Activated naive CD8-positive, alpha-beta T cell treated with anti-CD3 and anti-CD28 coated beads, Interleukin-2, amount 10 ng/mL, durations not matched to agents 7 days and 5 days (primary cell): ENCODE measurements at regions of chr3 and their contacts with region 1.

Region 1: GRCh38 chr3:129316131-129317013 is 37.7 kb downstream of the HMCES start:
- DNase-seq: peak; percentile 93
- ATAC-seq: peak; percentile 41
- H3K4me3 Mint-ChIP-seq: peak overlapping the region; percentile 81
- H3K27ac Mint-ChIP-seq: peak overlapping the region; percentile 65
- H3K4me1 Mint-ChIP-seq: peaks cover 29% of the 10 kb centered on the region
- H3K27me3 Mint-ChIP-seq: no peaks in the 10 kb centered on the region

Region 2: GRCh38 chr3:128650096-128651050 is 666.0 kb before region 1 on chr3 and contains the start of gene RPN1:
- POLR2A ChIA-PET with region 1: interaction called, 11 read pairs
- DNase-seq: peak; percentile 93
- ATAC-seq: peak; percentile 97
- H3K4me3 Mint-ChIP-seq: peak within 1 kb of the TSS; percentile 86
- H3K27ac Mint-ChIP-seq: peak within 1 kb of the TSS; percentile 88
- H3K4me1 Mint-ChIP-seq: peaks cover 27% of the 10 kb centered on the region
- H3K27me3 Mint-ChIP-seq: peaks cover 3% of the 10 kb centered on the region
- total RNA-seq, gene RPN1: 117 to 118 TPM

Region 3: GRCh38 chr3:129016356-129016719 is 300.0 kb before region 1 on chr3:
- POLR2A ChIA-PET with region 1: interaction called, 28 read pairs
- DNase-seq: peak; percentile 68
- ATAC-seq: peak; percentile 91
- H3K4me3 Mint-ChIP-seq: peak overlapping the region; percentile 61
- H3K27ac Mint-ChIP-seq: peak overlapping the region; percentile 90
- H3K4me1 Mint-ChIP-seq: peaks cover 29% of the 10 kb centered on the region
- H3K27me3 Mint-ChIP-seq: no peaks in the 10 kb centered on the region

Region 4: DNA sequence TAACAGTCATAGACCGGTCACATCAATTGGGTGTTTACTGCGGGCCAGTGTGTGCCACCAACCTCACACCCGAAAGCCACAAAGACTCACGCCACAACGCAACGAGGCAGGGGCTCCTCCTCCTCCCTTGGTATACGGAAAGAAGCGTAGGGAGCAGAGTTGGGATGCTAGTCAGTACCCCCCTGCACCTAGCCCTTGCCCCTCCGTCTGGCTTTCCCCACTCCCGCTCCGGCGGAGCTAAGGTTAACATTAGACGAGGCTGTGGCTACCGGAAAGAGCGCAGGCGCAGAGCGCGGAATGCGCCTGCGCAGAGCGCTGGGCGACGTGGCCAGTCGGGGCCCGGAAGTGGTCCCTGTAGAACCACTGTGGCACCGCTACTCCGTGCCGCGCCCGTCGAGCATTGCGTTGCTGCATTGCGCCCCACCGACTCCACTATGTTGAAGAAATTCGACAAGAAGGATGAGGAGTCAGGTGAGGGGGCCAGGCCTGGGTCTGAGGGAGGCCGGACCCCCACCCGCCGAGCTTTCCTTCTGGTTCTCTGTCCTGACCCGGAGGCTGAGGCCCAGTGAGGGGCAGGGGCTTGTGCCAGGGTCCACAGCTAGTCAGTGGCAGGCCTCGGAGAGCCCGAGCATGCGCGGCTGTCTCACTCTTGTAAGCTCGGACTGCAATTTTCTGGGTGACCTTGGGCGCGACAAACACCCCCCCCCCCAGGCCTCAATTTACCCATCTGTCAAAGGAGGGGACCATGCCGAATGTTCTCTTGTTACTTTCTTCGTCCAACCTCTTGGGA is 66.9 kb before region 1 on chr3 and contains the start of gene COPG1:
- POLR2A ChIA-PET with region 1: interaction called, 22 read pairs
- DNase-seq: peak; percentile 94
- ATAC-seq: peak; percentile 92
- H3K4me3 Mint-ChIP-seq: peak within 1 kb of the TSS; percentile 99
- H3K27ac Mint-ChIP-seq: peak within 1 kb of the TSS; percentile 98
- H3K4me1 Mint-ChIP-seq: peaks cover 42% of the 10 kb centered on the region
- H3K27me3 Mint-ChIP-seq: no peaks in the 10 kb centered on the region
- total RNA-seq, gene COPG1: 131 to 138 TPM

Region 5: GRCh38 chr3:129305592-129306091 is 10.7 kb before region 1 on chr3:
- POLR2A ChIA-PET with region 1: interaction called, 91 read pairs
- DNase-seq: no peak
- ATAC-seq: no peak
- H3K4me3 Mint-ChIP-seq: no peak overlapping the region
- H3K27ac Mint-ChIP-seq: no peak overlapping the region
- H3K4me1 Mint-ChIP-seq: peaks cover 21% of the 10 kb centered on the region
- H3K27me3 Mint-ChIP-seq: no peaks in the 10 kb centered on the region

Region 6: GRCh38 chr3:129352650-129353588 is 36.5 kb after region 1 on chr3:
- POLR2A ChIA-PET with region 1: no interaction called
- DNase-seq: no peak
- ATAC-seq: no peak
- H3K4me3 Mint-ChIP-seq: no peak overlapping the region
- H3K27ac Mint-ChIP-seq: no peak overlapping the region
- H3K4me1 Mint-ChIP-seq: no peaks in the 10 kb centered on the region
- H3K27me3 Mint-ChIP-seq: no peaks in the 10 kb centered on the region

Region 7: DNA sequence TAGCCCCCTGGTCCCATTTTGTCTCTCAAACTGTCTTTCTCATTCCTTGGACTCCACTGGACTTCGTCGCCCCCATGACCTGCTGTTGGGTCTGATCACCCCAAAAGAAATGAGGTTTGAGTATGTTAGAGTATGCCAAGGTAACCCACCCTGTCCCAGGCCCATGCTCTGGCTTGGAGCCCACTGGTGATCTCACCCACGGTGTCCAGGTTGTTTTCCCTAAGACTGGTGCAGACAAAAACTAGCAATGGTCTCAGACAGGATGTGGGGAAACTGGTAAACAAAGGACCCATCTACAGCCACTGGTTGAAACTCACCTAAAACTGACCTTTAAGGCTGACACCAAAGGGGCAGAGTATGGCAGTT is 73.2 kb after region 1 on chr3:
- POLR2A ChIA-PET with region 1: no interaction called
- DNase-seq: no peak
- ATAC-seq: no peak
- H3K4me3 Mint-ChIP-seq: no peak overlapping the region
- H3K27ac Mint-ChIP-seq: no peak overlapping the region
- H3K4me1 Mint-ChIP-seq: no peaks in the 10 kb centered on the region
- H3K27me3 Mint-ChIP-seq: no peaks in the 10 kb centered on the region

Region 8: DNA sequence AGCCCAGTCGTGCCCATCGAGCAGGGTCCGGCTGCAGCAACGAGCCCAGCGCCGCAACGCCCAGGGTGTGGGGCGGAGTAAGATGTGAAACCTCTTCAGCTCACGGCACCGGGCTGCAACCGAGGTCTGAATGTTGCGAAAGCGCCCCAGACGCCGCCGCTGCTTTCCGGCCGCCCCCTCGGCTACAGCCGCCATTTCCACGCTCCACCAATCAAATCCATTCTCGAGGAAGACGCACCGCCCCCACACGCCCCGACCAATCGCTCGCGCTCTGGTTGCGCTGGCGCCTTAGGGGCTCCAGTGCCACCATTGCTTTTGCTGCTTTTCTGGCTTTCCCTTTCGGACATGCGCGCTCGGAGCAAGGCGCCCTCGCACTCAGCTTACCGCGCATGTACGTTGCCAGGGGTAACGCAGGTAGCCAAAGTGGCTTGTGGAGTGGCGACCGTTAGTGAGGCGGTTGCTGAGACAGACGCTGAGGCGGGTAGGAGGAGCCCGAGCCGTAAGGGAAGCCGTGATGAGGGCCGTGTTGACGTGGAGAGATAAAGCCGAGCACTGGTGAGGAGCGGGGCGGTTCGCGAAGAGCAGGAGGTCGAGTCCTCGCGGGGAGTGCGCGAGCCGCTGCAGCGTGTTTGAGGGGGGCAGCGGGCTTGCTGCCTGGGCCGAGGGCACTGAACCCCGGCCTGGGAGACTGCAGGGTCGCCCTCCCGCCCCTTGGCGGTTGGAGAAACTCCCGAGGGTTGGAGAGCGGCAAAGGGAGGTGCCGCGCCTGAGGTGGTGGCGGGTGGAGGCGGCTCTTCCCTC is 123.6 kb after region 1 on chr3 and contains the starts of genes IFT122 and MBD4:
- POLR2A ChIA-PET with region 1: interaction called, 40 read pairs
- DNase-seq: peak; percentile 96
- ATAC-seq: peak; percentile 95
- H3K4me3 Mint-ChIP-seq: peak within 1 kb of the TSS; percentile 87
- H3K27ac Mint-ChIP-seq: peak within 1 kb of the TSS; percentile 95
- H3K4me1 Mint-ChIP-seq: peaks cover 41% of the 10 kb centered on the region
- H3K27me3 Mint-ChIP-seq: no peaks in the 10 kb centered on the region
- total RNA-seq, gene IFT122: 23.0 to 25.9 TPM
- total RNA-seq, gene MBD4: 49.0 to 57.6 TPM